ENCODE measurements at regions of chr19 and their contacts with region 1.

Region 1: GRCh38 chr19:33771384-33772101 is 25.1 kb upstream of the KCTD15 start:
- DNase-seq: peak; percentile 53 to 97 (median 80)
- ATAC-seq: peak; percentile 79 to 94 (median 92)
- H3K4me3 ChIP-seq: no peak overlapping the region
- H3K27ac ChIP-seq: no peak overlapping the region
- H3K4me1 ChIP-seq: no peaks in the 10 kb centered on the region
- H3K27me3 ChIP-seq: no peaks in the 10 kb centered on the region
- CTCF ChIP-seq: peak; percentile 82 to 88 (median 86)

Region 2: GRCh38 chr19:33235269-33235995 is 536.1 kb before region 1 on chr19:
- intact Hi-C with region 1: loop called in 2 of 3 experiments (anchors 5 to 10 kb)
- DNase-seq: peak; percentile 50 to 98 (median 83)
- ATAC-seq: peak; percentile 74 to 94 (median 89)
- H3K4me3 ChIP-seq: no peak overlapping the region
- H3K27ac ChIP-seq: no peak overlapping the region
- H3K4me1 ChIP-seq: no peaks in the 10 kb centered on the region
- H3K27me3 ChIP-seq: no peaks in the 10 kb centered on the region
- CTCF ChIP-seq: peak; percentile 77 to 92 (median 86)

Region 3: GRCh38 chr19:33430674-33431277 is 340.8 kb before region 1 on chr19:
- intact Hi-C with region 1: loop called (anchors 5 to 10 kb)
- DNase-seq: peak; percentile 33 to 89 (median 70)
- ATAC-seq: peak; percentile 67 to 93 (median 90)
- H3K4me3 ChIP-seq: no peak overlapping the region
- H3K27ac ChIP-seq: no peak overlapping the region
- H3K4me1 ChIP-seq: no peaks in the 10 kb centered on the region
- H3K27me3 ChIP-seq: no peaks in the 10 kb centered on the region
- CTCF ChIP-seq: peak; percentile 54 to 70 (median 63)